ENCODE measurements at regions of chr9 and their contacts with region 1.

Region 1: GRCh38 chr9:104863180-104863883 is 64.6 kb downstream of the ABCA1 start:
- DNase-seq: peak; percentile 93
- ATAC-seq: peak; percentile 59
- H3K4me3 ChIP-seq: no peak overlapping the region
- H3K27ac ChIP-seq: peak overlapping the region; percentile 56; the same call in 1 of the 2 replicates
- H3K4me1 ChIP-seq: peaks cover 41% of the 10 kb centered on the region
- H3K27me3 ChIP-seq: no peaks in the 10 kb centered on the region
- CTCF ChIP-seq: peak; percentile 88
- POLR2A ChIP-seq: no peak
- RAD21 ChIP-seq: peak; percentile 86

Region 2: DNA sequence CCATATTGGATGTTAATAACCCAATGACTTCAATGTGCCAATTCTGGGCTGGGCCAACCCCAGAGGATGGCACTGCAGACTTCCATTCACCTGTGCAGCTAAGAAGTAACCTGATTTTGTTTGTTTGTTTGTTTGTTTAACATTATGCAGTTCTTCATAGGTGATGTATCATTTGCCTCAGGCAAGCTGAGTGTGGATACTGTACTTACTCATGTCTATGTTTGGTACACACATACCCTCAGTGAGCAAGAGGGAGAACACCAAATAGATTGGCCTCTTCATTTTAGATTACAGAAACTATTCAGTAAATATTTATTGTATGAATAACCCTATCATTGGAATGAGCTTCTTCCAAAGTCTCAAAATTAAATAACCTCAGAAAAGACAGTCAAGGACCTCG is 949.4 kb before region 1 on chr9:
- CTCF ChIA-PET with region 1: no interaction called
- POLR2A ChIA-PET with region 1: no interaction called
- dilution Hi-C with region 1: no loop called
- in situ Hi-C with region 1: no loop called
- intact Hi-C with region 1: no loop called
- DNase-seq: no peak
- ATAC-seq: no peak
- H3K4me3 ChIP-seq: no peak overlapping the region
- H3K27ac ChIP-seq: no peak overlapping the region
- H3K4me1 ChIP-seq: no peaks in the 10 kb centered on the region
- H3K27me3 ChIP-seq: no peaks in the 10 kb centered on the region
- CTCF ChIP-seq: no peak
- POLR2A ChIP-seq: no peak
- RAD21 ChIP-seq: no peak

Region 3: DNA sequence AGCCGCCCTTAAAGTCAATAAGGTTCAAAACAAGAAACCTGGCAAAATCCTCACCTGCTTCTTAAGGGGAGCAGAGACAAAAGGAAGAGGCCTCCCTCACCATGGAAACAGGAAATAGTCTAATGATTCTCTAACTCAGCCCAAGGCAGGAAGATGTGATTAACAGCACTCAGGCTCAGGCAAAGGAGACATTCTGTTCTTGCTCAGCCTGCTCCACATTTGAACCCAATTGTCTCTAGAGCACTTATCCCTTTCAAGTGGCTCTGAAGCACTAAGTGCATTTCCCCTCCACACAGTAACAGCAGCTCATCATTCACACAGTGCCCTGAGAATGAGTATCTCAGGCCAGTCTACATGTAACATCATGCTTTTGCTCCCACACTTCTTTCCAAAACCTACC is 27.1 kb before region 1 on chr9:
- CTCF ChIA-PET with region 1: no interaction called
- POLR2A ChIA-PET with region 1: no interaction called
- dilution Hi-C with region 1: no loop called
- in situ Hi-C with region 1: no loop called
- intact Hi-C with region 1: no loop called
- DNase-seq: peak; percentile 15
- ATAC-seq: no peak
- H3K4me3 ChIP-seq: no peak overlapping the region
- H3K27ac ChIP-seq: no peak overlapping the region
- H3K4me1 ChIP-seq: peaks cover 4% of the 10 kb centered on the region
- H3K27me3 ChIP-seq: no peaks in the 10 kb centered on the region
- CTCF ChIP-seq: no peak
- POLR2A ChIP-seq: no peak
- RAD21 ChIP-seq: no peak

Region 4: GRCh38 chr9:104991144-104991953 is 128.0 kb after region 1 on chr9:
- CTCF ChIA-PET with region 1: no interaction called
- POLR2A ChIA-PET with region 1: no interaction called
- dilution Hi-C with region 1: no loop called
- in situ Hi-C with region 1: no loop called
- intact Hi-C with region 1: loop called (anchors 10 kb)
- DNase-seq: peak; percentile 82
- ATAC-seq: peak; percentile 85
- H3K4me3 ChIP-seq: peak overlapping the region; percentile 65
- H3K27ac ChIP-seq: peak overlapping the region; percentile 98
- H3K4me1 ChIP-seq: peaks cover 25% of the 10 kb centered on the region
- H3K27me3 ChIP-seq: no peaks in the 10 kb centered on the region
- CTCF ChIP-seq: no peak
- POLR2A ChIP-seq: peak; percentile 37; the same call in 1 of the 2 replicates
- RAD21 ChIP-seq: peak; percentile 27

Region 5: GRCh38 chr9:105064315-105065097 is 201.2 kb after region 1 on chr9:
- CTCF ChIA-PET with region 1: no interaction called
- POLR2A ChIA-PET with region 1: no interaction called
- dilution Hi-C with region 1: no loop called
- in situ Hi-C with region 1: loop called (anchors 10 kb)
- intact Hi-C with region 1: loop called (anchors 5 kb)
- DNase-seq: peak; percentile 97
- ATAC-seq: peak; percentile 86
- H3K4me3 ChIP-seq: no peak overlapping the region
- H3K27ac ChIP-seq: peak overlapping the region; percentile 97
- H3K4me1 ChIP-seq: peaks cover 21% of the 10 kb centered on the region
- H3K27me3 ChIP-seq: no peaks in the 10 kb centered on the region
- CTCF ChIP-seq: no peak
- POLR2A ChIP-seq: peak; percentile 22
- RAD21 ChIP-seq: peak; percentile 25

Region 6: GRCh38 chr9:105150991-105151685 is 287.8 kb after region 1 on chr9:
- CTCF ChIA-PET with region 1: interaction called, 4 read pairs
- POLR2A ChIA-PET with region 1: no interaction called
- dilution Hi-C with region 1: no loop called
- in situ Hi-C with region 1: loop called (anchors 5 kb)
- intact Hi-C with region 1: no loop called
- DNase-seq: peak; percentile 69
- ATAC-seq: peak; percentile 76
- H3K4me3 ChIP-seq: no peak overlapping the region
- H3K27ac ChIP-seq: no peak overlapping the region
- H3K4me1 ChIP-seq: peaks cover 14% of the 10 kb centered on the region
- H3K27me3 ChIP-seq: no peaks in the 10 kb centered on the region
- CTCF ChIP-seq: no peak
- POLR2A ChIP-seq: no peak
- RAD21 ChIP-seq: no peak

Region 7: DNA sequence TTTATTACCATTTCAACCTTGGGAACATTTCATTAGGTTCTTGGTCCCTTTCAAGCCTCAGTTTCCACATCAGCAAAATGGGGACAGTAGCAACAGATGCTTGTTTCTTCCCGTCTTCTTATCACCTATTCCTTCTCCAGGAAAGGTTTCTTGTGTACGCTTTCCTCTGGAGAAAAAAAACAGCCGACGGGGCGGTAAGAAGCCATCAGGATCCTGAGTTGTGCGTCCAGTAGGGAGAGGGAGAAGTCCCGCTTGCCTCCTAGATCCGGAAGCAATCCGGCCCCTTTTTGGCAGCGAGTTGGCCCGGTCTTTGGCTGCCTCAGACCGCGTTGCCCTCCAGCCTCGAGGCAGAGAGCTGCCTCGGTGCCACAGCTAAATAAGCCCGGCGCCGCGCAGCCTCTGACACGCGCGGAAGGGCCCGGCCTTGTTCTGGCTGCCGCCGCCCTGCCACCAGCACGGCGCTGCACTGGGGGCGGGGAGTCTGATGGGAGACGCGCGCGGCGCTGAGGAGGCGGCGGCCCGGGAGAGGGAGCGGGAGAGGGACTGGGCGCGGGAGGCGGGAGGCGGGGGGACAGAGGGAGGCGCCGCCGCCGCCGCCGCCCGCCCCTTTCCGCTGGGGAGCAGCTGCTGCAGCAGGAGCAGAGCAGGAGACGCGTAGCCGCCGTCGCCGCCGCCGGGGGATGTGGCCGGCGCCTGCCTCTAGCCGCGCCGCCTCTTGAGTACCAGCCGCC is 380.8 kb after region 1 on chr9 and contains the start of gene SLC44A1:
- CTCF ChIA-PET with region 1: interaction called, 4 read pairs
- POLR2A ChIA-PET with region 1: no interaction called
- dilution Hi-C with region 1: no loop called
- in situ Hi-C with region 1: no loop called
- intact Hi-C with region 1: loop called (anchors 2 kb)
- DNase-seq: peak; percentile 92
- ATAC-seq: peak; percentile 98
- H3K4me3 ChIP-seq: peak within 1 kb of the TSS; percentile 63
- H3K27ac ChIP-seq: peak within 1 kb of the TSS; percentile 24
- H3K4me1 ChIP-seq: no peaks in the 10 kb centered on the region; the same call in 1 of the 2 replicates
- H3K27me3 ChIP-seq: no peaks in the 10 kb centered on the region
- CTCF ChIP-seq: no peak
- POLR2A ChIP-seq: no peak
- RAD21 ChIP-seq: peak; percentile 28; the same call in 1 of the 2 replicates
- total RNA-seq, gene SLC44A1: 19.4 and 21.7 TPM in 2 replicates

Region 8: DNA sequence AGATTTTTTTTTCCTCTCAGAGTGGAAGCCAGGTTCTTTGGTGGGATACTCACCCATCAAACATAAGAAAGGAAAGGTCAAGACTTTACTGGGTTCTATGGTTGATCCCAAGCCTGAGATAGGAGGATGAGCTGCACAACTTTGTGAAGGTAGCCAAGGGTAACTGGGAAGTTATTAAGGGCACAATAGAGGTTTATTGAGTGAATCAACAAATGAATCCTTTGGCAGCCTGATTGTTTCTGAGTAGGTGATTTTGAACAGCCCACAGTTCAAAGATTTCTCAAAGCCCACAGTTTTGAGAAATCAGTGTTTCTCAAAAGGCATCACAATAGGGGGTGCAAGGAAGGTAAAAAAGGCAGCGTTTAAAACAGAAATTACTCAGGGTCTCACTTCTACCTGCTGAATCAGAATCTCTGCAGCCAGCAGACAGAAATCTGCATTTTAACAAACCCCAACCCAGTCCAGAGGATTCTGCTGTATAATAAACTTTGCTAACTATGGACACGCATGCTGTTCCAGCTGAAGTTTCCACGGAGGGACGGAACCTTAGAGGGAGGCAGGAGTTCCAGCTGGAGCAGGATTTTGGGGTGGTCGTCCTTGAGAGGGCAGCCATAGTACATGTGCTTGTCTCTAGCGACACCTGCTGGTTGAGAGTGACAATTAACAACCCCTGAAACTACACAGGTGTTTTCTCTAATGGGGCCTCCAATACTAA is 551.8 kb after region 1 on chr9:
- CTCF ChIA-PET with region 1: interaction called, 5 read pairs
- POLR2A ChIA-PET with region 1: no interaction called
- dilution Hi-C with region 1: no loop called
- in situ Hi-C with region 1: loop called (anchors 10 kb)
- intact Hi-C with region 1: loop called (anchors 2 kb)
- DNase-seq: peak; percentile 55
- ATAC-seq: peak; percentile 70
- H3K4me3 ChIP-seq: no peak overlapping the region
- H3K27ac ChIP-seq: no peak overlapping the region
- H3K4me1 ChIP-seq: peaks cover 6% of the 10 kb centered on the region
- H3K27me3 ChIP-seq: no peaks in the 10 kb centered on the region
- CTCF ChIP-seq: peak; percentile 77
- POLR2A ChIP-seq: no peak
- RAD21 ChIP-seq: peak; percentile 97